Aorta (tissue), 5 donors: ENCODE measurements at regions of chr5 and their contacts with region 1.

Region 1: DNA sequence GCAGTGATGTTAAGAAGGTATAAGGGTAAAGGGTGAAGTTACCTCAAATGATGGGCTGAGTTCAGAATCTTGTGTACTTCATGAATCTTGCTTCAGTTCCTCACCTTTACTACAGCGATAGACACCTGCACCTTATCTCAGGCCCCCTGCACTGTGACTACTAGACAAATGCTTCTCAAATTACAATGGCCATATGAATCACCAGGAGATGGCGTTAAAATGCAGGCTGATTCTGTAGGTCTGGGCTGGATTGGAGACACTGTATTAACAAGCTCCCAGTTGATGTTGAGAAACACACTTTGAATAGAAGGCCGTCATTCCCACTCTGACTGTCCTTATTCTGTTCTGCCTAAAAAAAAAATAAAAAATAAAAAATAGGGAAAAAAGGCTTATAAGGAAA is 29.8 kb downstream of the TARS1 start:
- DNase-seq: no peak
- ATAC-seq: peak; percentile 60
- H3K4me3 ChIP-seq: no peak overlapping the region
- H3K27ac ChIP-seq: no peak overlapping the region
- H3K4me1 ChIP-seq: no peaks in the 10 kb centered on the region
- H3K27me3 ChIP-seq: no peaks in the 10 kb centered on the region

Region 2: DNA sequence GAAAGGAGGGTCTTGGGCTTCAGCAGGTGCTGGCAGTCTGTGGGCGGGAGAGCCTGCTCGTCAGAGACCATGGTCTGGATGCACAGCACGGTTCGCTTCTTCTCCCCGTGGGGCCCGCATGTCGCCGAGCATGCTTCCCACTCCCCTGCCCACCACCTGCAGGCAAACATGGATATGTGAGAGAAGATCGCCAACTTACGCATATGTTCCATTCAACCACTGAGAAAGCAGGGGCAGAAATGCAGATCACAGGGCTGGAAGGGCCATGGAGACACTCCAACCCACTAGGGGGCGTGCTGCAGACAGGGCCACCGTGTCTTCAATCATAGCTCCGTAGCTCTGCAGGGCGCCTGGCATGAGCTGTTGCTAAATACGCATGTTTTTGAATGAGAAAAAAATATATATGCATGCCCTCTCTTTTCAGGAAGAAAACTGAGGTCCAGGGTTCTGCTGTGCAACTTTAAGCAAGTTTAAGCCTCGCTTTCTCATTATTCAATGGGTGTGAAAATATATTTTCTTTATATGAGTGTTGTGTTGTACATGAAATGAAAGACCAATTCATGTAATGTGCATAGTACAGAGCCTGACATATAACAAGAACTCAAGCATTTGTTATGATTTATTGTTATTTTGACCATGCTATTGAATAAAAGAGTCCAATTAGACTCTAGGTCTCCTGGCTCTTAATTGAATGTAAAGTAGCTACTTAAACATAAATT is 118.3 kb after region 1 on chr5:
- intact Hi-C with region 1: loop called in 1 of 2 experiments (anchors 10 kb)
- DNase-seq: no peak
- ATAC-seq: no peak
- H3K4me3 ChIP-seq: no peak overlapping the region
- H3K27ac ChIP-seq: no peak overlapping the region
- H3K4me1 ChIP-seq: no peaks in the 10 kb centered on the region
- H3K27me3 ChIP-seq: no peaks in the 10 kb centered on the region

Region 3: GRCh38 chr5:33621514-33621913 is 151.0 kb after region 1 on chr5:
- intact Hi-C with region 1: no loop called
- DNase-seq: no peak
- ATAC-seq: no peak
- H3K4me3 ChIP-seq: no peak overlapping the region
- H3K27ac ChIP-seq: no peak overlapping the region
- H3K4me1 ChIP-seq: no peaks in the 10 kb centered on the region
- H3K27me3 ChIP-seq: no peaks in the 10 kb centered on the region